CD4-positive, alpha-beta memory T cell (primary cell): ENCODE measurements at regions of chr14 and their contacts with region 1.

Region 1: GRCh38 chr14:66359500-66359899 is 126.7 kb upstream of the CCDC196 start:
- DNase-seq: peak in 4 of 5 donors; percentile 33 to 52 (median 49)
- H3K4me3 ChIP-seq: no peak overlapping the region
- H3K4me3 Mint-ChIP-seq: no peak overlapping the region
- H3K27ac ChIP-seq: no peak overlapping the region
- H3K27ac Mint-ChIP-seq: no peak overlapping the region
- H3K4me1 ChIP-seq: no peaks in the 10 kb centered on the region
- H3K4me1 Mint-ChIP-seq: no peaks in the 10 kb centered on the region
- H3K27me3 ChIP-seq: no peaks in the 10 kb centered on the region
- H3K27me3 Mint-ChIP-seq: peaks cover 3 to 7% of the 10 kb centered on the region in 2 donors

Region 2: GRCh38 chr14:66152747-66153146 is 206.8 kb before region 1 on chr14:
- CTCF ChIA-PET with region 1: no interaction called
- POLR2A ChIA-PET with region 1: no interaction called
- intact Hi-C with region 1: no loop called
- DNase-seq: no peak
- H3K4me3 ChIP-seq: no peak overlapping the region
- H3K4me3 Mint-ChIP-seq: no peak overlapping the region
- H3K27ac ChIP-seq: no peak overlapping the region
- H3K27ac Mint-ChIP-seq: no peak overlapping the region
- H3K4me1 ChIP-seq: no peaks in the 10 kb centered on the region
- H3K4me1 Mint-ChIP-seq: no peaks in the 10 kb centered on the region
- H3K27me3 ChIP-seq: no peaks in the 10 kb centered on the region
- H3K27me3 Mint-ChIP-seq: peaks cover 0 to 4% of the 10 kb centered on the region in 2 donors

Region 3: GRCh38 chr14:66254038-66254437 is 105.5 kb before region 1 on chr14:
- CTCF ChIA-PET with region 1: no interaction called
- POLR2A ChIA-PET with region 1: no interaction called
- intact Hi-C with region 1: no loop called
- DNase-seq: no peak
- H3K4me3 ChIP-seq: no peak overlapping the region
- H3K4me3 Mint-ChIP-seq: no peak overlapping the region
- H3K27ac ChIP-seq: no peak overlapping the region
- H3K27ac Mint-ChIP-seq: no peak overlapping the region
- H3K4me1 ChIP-seq: no peaks in the 10 kb centered on the region
- H3K4me1 Mint-ChIP-seq: no peaks in the 10 kb centered on the region
- H3K27me3 ChIP-seq: no peaks in the 10 kb centered on the region
- H3K27me3 Mint-ChIP-seq: peaks cover 0 to 3% of the 10 kb centered on the region in 2 donors

Region 4: GRCh38 chr14:66380143-66380542 is 20.6 kb after region 1 on chr14:
- CTCF ChIA-PET with region 1: interaction called, 10 read pairs
- POLR2A ChIA-PET with region 1: no interaction called
- intact Hi-C with region 1: no loop called
- DNase-seq: no peak
- H3K4me3 ChIP-seq: no peak overlapping the region
- H3K4me3 Mint-ChIP-seq: no peak overlapping the region
- H3K27ac ChIP-seq: no peak overlapping the region
- H3K27ac Mint-ChIP-seq: no peak overlapping the region
- H3K4me1 ChIP-seq: no peaks in the 10 kb centered on the region
- H3K4me1 Mint-ChIP-seq: no peaks in the 10 kb centered on the region
- H3K27me3 ChIP-seq: no peaks in the 10 kb centered on the region
- H3K27me3 Mint-ChIP-seq: peaks cover 0 to 2% of the 10 kb centered on the region in 2 donors

Region 5: GRCh38 chr14:66395300-66395699 is 35.8 kb after region 1 on chr14:
- CTCF ChIA-PET with region 1: interaction called, 29 read pairs
- POLR2A ChIA-PET with region 1: no interaction called
- intact Hi-C with region 1: no loop called
- DNase-seq: peak in 4 of 5 donors; percentile 19 to 45 (median 30)
- H3K4me3 ChIP-seq: no peak overlapping the region
- H3K4me3 Mint-ChIP-seq: no peak overlapping the region
- H3K27ac ChIP-seq: no peak overlapping the region
- H3K27ac Mint-ChIP-seq: peak overlapping the region in 3 of 7 donors; percentile 42 to 58 (median 43)
- H3K4me1 ChIP-seq: peaks cover 5% of the 10 kb centered on the region
- H3K4me1 Mint-ChIP-seq: peaks cover 3 to 6% (median 5%) of the 10 kb centered on the region in 4 donors
- H3K27me3 ChIP-seq: no peaks in the 10 kb centered on the region
- H3K27me3 Mint-ChIP-seq: no peaks in the 10 kb centered on the region

Region 6: GRCh38 chr14:66403183-66403582 is 43.7 kb after region 1 on chr14:
- CTCF ChIA-PET with region 1: interaction called, 45 read pairs
- POLR2A ChIA-PET with region 1: no interaction called
- intact Hi-C with region 1: loop called (anchors 1 kb)
- DNase-seq: peak in 4 of 5 donors; percentile 7 to 10 (median 9)
- H3K4me3 ChIP-seq: no peak overlapping the region
- H3K4me3 Mint-ChIP-seq: peak overlapping the region in 2 of 8 donors; percentile 8 to 9
- H3K27ac ChIP-seq: no peak overlapping the region
- H3K27ac Mint-ChIP-seq: no peak overlapping the region
- H3K4me1 ChIP-seq: peaks cover 11% of the 10 kb centered on the region
- H3K4me1 Mint-ChIP-seq: peaks cover 0 to 7% (median 0%) of the 10 kb centered on the region in 4 donors
- H3K27me3 ChIP-seq: no peaks in the 10 kb centered on the region
- H3K27me3 Mint-ChIP-seq: no peaks in the 10 kb centered on the region

Region 7: GRCh38 chr14:66453469-66453868 is 94.0 kb after region 1 on chr14:
- CTCF ChIA-PET with region 1: no interaction called
- POLR2A ChIA-PET with region 1: no interaction called
- intact Hi-C with region 1: no loop called
- DNase-seq: no peak
- H3K4me3 ChIP-seq: no peak overlapping the region
- H3K4me3 Mint-ChIP-seq: no peak overlapping the region
- H3K27ac ChIP-seq: no peak overlapping the region
- H3K27ac Mint-ChIP-seq: no peak overlapping the region
- H3K4me1 ChIP-seq: no peaks in the 10 kb centered on the region
- H3K4me1 Mint-ChIP-seq: no peaks in the 10 kb centered on the region
- H3K27me3 ChIP-seq: no peaks in the 10 kb centered on the region
- H3K27me3 Mint-ChIP-seq: no peaks in the 10 kb centered on the region